ENCODE measurements at regions of chr5 and their contacts with region 1.

Region 1: GRCh38 chr5:154072414-154073171 is 33.8 kb downstream of the MFAP3 start:
- DNase-seq: peak; percentile 95
- H3K4me3 ChIP-seq: no peak overlapping the region
- H3K27ac ChIP-seq: no peak overlapping the region
- H3K4me1 ChIP-seq: peaks cover under 1 to 33% (median 8%) of the 10 kb centered on the region in 6 donors
- H3K27me3 ChIP-seq: no peaks in the 10 kb centered on the region
- CTCF ChIP-seq: peak; percentile 83 to 95 (median 93)
- POLR2A ChIP-seq: no peak

Region 2: GRCh38 chr5:153919161-153919560 is 153.4 kb before region 1 on chr5:
- intact Hi-C with region 1: no loop called
- DNase-seq: no peak
- H3K4me3 ChIP-seq: no peak overlapping the region
- H3K27ac ChIP-seq: no peak overlapping the region
- H3K4me1 ChIP-seq: no peaks in the 10 kb centered on the region
- H3K27me3 ChIP-seq: peaks cover 0 to 5% (median 0%) of the 10 kb centered on the region in 7 donors
- CTCF ChIP-seq: no peak
- POLR2A ChIP-seq: no peak

Region 3: DNA sequence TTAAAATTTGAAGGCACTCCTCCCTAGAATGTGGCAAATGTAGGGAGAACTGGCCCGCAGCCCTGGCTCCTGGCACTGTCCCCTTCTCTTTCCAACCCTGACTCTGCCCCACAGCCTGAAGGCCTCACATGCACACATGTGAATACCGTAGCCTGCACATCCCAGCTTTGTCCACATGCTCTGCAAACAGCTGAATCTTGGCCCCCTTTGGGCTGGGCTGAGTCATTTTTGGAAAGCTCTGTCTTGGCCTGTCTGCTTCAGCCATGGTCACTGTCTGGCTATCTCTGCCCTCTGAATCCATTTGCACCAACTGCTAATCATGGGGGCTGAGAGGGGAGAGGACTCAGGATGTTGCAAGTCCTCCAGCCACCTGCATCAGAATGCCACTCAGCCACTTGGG is 95.8 kb after region 1 on chr5:
- intact Hi-C with region 1: no loop called
- DNase-seq: no peak
- H3K4me3 ChIP-seq: no peak overlapping the region
- H3K27ac ChIP-seq: no peak overlapping the region
- H3K4me1 ChIP-seq: no peaks in the 10 kb centered on the region
- H3K27me3 ChIP-seq: peaks cover 0 to 23% (median 0%) of the 10 kb centered on the region in 7 donors
- CTCF ChIP-seq: no peak
- POLR2A ChIP-seq: no peak

Region 4: DNA sequence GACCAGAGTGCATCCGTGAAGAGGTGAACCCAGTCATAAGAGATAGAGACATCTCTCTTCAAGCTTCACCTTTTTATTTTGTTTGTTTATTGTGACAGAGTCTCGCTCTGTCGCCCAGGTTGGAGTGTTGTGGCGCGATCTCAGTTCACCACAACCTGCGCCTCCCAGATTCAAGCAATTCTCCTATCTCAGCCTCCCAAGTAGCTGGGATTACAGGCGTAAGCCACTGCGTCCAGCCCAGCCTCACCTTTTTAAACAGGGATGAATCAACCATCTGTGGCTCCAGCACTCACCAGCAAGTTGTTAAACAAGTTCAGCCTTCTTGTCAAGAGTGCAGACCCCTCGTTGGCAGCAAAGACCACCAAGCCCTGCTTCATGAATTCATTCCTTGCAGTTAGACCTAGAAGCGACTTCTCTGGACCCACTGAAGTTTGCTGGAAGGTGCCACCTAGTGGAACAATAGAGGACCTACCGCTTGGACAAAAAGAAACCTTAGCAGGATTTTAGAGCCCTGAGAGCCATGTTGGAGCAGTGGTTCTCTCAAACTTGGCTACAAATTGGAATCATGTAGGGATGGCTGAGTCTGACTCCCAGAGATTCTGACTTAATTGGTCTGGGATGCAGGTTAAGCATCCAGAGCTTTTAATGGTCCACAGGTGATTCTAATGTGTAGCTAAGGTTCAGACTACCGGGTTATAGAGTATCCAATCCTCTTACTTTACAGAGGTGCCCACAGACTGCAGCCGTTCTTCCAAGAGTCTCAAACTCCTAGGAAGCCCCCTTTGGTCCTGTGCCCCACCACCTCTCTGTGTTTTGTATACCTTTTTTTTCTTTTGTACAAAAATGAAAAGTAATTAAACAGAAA is 107.5 kb after region 1 on chr5:
- intact Hi-C with region 1: loop called (anchors 5 kb)
- DNase-seq: no peak
- H3K4me3 ChIP-seq: no peak overlapping the region
- H3K27ac ChIP-seq: no peak overlapping the region
- H3K4me1 ChIP-seq: peaks cover 0 to 6% (median 0%) of the 10 kb centered on the region in 6 donors
- H3K27me3 ChIP-seq: no peaks in the 10 kb centered on the region
- CTCF ChIP-seq: peak; percentile 56 to 85 (median 78)
- POLR2A ChIP-seq: no peak

Region 5: DNA sequence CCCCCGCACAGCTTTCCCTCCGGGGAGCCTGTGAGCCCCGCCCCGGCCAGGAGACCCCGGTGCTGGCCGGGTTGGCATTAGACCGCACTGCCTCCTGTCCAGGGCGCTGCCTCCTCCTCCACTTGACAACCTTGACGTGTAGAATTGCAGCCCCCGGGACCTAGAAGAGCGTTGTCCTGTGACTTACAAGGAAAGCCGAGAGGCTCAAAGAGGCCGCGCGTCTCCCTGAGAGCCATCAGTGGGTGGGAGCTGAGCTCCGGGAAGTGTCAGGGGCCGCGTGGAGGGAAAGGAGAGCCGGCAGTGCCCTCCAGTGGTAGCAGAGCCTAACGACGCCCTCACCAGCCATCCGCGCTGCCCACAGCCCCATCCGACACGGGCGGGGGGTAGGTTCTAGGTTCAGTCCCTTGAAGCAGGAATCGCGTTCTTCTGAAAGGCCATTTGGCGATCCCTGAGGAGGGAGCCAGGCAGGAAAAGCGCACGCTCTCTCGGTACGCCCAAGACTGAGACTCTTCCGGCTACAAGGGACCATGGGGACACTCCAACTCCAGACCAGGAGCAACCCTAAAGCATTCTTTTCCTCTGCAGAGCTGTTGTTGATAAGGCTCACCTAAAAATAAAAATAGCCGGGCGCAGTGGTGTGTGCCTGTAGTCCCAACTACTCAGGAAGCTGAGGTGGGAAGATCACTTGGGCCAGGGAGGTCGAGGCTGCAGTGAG is 332.6 kb after region 1 on chr5:
- intact Hi-C with region 1: loop called (anchors 5 kb)
- DNase-seq: peak; percentile 95
- H3K4me3 ChIP-seq: peak overlapping the region; percentile 11 to 63 (median 25)
- H3K27ac ChIP-seq: peak overlapping the region in 1 of 8 donors; percentile 57
- H3K4me1 ChIP-seq: peaks cover 3 to 18% (median 14%) of the 10 kb centered on the region in 6 donors
- H3K27me3 ChIP-seq: no peaks in the 10 kb centered on the region
- CTCF ChIP-seq: peak; percentile 83 to 96 (median 91)
- POLR2A ChIP-seq: no peak

Measured in spleen (tissue), 13 donors.